CD4-positive, alpha-beta memory T cell (primary cell): ENCODE measurements at regions of chr11 and their contacts with region 1.

Region 1: DNA sequence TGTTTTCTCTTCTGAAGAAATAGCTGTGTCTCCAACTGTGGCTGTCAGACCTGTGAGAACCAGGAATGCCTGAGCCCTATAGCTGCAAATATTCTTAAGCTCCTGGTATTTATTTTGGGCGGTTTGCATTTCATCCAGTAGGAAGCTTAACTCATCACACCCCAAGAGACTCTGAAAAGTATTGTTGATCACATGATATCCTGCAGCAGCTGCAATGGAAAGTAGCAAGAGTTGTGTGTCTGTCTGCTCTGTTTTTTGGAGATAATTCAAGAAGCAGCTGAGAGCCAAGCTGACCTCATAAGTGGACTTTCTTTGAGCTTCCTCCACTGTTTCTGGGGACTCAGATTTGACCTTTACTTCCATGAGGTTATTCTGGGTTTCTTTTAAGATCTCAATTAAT is 36.4 kb upstream of the MRPL17 start:
- DNase-seq: no peak
- H3K4me3 ChIP-seq: no peak overlapping the region
- H3K4me3 Mint-ChIP-seq: peak overlapping the region in 2 of 8 donors; percentile 27 to 31
- H3K27ac ChIP-seq: no peak overlapping the region
- H3K27ac Mint-ChIP-seq: peak overlapping the region; percentile 0 to 86 (median 59)
- H3K4me1 ChIP-seq: peaks cover 75% of the 10 kb centered on the region
- H3K4me1 Mint-ChIP-seq: peaks cover 56 to 91% (median 77%) of the 10 kb centered on the region in 4 donors
- H3K27me3 ChIP-seq: no peaks in the 10 kb centered on the region
- H3K27me3 Mint-ChIP-seq: no peaks in the 10 kb centered on the region

Region 2: DNA sequence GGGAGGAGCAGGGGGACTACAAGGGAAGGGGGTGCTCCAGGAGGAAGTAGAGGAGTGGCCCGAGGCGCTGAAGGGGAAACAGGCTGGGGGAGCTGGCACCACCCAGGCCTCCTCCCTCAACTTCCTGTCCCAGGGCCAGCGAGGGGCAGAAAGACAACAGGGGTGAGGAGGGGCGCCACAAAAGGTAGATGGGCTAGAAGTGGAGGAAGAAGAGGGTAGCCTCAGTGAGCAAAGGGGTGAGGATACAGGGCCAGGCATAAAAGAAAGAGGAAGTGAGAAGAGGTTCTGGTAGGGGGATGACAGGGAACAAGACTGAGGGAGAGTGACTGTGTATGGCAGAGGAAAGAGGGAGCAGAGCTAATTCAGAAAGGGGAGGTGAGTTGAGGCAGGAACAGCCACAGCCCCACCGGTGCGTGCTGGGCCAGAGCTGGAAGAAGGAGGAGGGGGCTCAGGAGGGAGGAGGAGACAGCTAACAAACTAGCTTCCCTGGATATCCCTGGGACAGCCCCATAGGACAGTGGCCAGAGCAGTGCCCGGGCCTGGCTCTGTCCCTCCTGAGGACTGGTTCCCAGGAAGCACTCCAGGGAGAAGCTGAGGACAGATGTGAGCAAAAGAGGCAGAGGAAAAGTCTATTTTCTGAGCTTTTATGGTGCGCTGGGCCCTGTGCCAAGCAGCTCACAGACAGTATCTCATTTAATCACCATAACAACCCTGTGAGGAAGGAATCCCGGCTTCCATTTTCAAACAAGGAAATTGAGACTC is 72.5 kb before region 1 on chr11:
- CTCF ChIA-PET with region 1: no interaction called
- POLR2A ChIA-PET with region 1: no interaction called
- intact Hi-C with region 1: no loop called
- DNase-seq: peak in 3 of 5 donors; percentile 22 to 31 (median 22)
- H3K4me3 ChIP-seq: peak overlapping the region; percentile 8 to 26
- H3K4me3 Mint-ChIP-seq: no peak overlapping the region
- H3K27ac ChIP-seq: peak overlapping the region; percentile 54
- H3K27ac Mint-ChIP-seq: no peak overlapping the region
- H3K4me1 ChIP-seq: peaks cover 44% of the 10 kb centered on the region
- H3K4me1 Mint-ChIP-seq: peaks cover 0 to 12% (median 0%) of the 10 kb centered on the region in 4 donors
- H3K27me3 ChIP-seq: no peaks in the 10 kb centered on the region
- H3K27me3 Mint-ChIP-seq: no peaks in the 10 kb centered on the region

Region 3: GRCh38 chr11:6737872-6738466 is 18.4 kb after region 1 on chr11:
- CTCF ChIA-PET with region 1: interaction called, 51 read pairs
- POLR2A ChIA-PET with region 1: interaction called, 14 read pairs
- intact Hi-C with region 1: no loop called
- DNase-seq: peak; percentile 73 to 82 (median 75)
- H3K4me3 ChIP-seq: no peak overlapping the region
- H3K4me3 Mint-ChIP-seq: peak overlapping the region; percentile 23 to 77 (median 38)
- H3K27ac ChIP-seq: peak overlapping the region; percentile 38
- H3K27ac Mint-ChIP-seq: peak overlapping the region; percentile 60 to 89 (median 75)
- H3K4me1 ChIP-seq: peaks cover 88% of the 10 kb centered on the region
- H3K4me1 Mint-ChIP-seq: peaks cover 75 to 91% (median 83%) of the 10 kb centered on the region in 4 donors
- H3K27me3 ChIP-seq: no peaks in the 10 kb centered on the region
- H3K27me3 Mint-ChIP-seq: no peaks in the 10 kb centered on the region

Region 4: GRCh38 chr11:6895010-6895409 is 175.4 kb after region 1 on chr11:
- CTCF ChIA-PET with region 1: no interaction called
- POLR2A ChIA-PET with region 1: no interaction called
- intact Hi-C with region 1: no loop called
- DNase-seq: no peak
- H3K4me3 ChIP-seq: no peak overlapping the region
- H3K4me3 Mint-ChIP-seq: no peak overlapping the region
- H3K27ac ChIP-seq: no peak overlapping the region
- H3K27ac Mint-ChIP-seq: no peak overlapping the region
- H3K4me1 ChIP-seq: no peaks in the 10 kb centered on the region
- H3K4me1 Mint-ChIP-seq: no peaks in the 10 kb centered on the region
- H3K27me3 ChIP-seq: no peaks in the 10 kb centered on the region
- H3K27me3 Mint-ChIP-seq: peaks cover 10 to 16% of the 10 kb centered on the region in 2 donors